Endothelial cell of umbilical vein (primary cell): ENCODE measurements at regions of chr5 and their contacts with region 1.

Region 1: DNA sequence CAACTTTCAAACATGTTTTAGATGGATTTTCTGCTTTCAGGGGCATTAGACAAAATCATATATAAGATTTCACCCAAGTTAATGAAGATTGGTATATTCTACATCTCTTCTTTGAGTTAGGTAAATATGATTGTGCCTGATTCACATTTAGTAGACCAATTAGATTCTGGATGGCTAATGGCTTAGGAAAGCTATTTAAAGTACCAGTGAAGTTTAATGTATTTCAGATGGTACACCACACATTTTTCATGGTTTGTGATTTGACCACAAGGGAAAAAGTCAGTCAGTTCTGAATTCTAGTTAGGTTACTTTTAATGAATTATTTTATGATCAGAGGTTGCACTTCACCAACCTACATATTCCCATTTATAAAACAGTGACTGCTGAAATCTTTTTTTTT is 409.7 kb downstream of the ADGRV1 start:
- DNase-seq: no peak
- H3K4me3 ChIP-seq: no peak overlapping the region
- H3K27ac ChIP-seq: peak overlapping the region; percentile 57
- H3K4me1 ChIP-seq: peaks cover 32% of the 10 kb centered on the region
- H3K27me3 ChIP-seq: no peaks in the 10 kb centered on the region
- CTCF ChIP-seq: no peak
- POLR2A ChIP-seq: no peak

Region 2: GRCh38 chr5:90621848-90622247 is 346.5 kb before region 1 on chr5:
- CTCF ChIA-PET with region 1: no interaction called
- POLR2A ChIA-PET with region 1: no interaction called
- dilution Hi-C with region 1: no loop called
- intact Hi-C with region 1: no loop called
- DNase-seq: no peak
- H3K4me3 ChIP-seq: no peak overlapping the region
- H3K27ac ChIP-seq: no peak overlapping the region
- H3K4me1 ChIP-seq: no peaks in the 10 kb centered on the region
- H3K27me3 ChIP-seq: no peaks in the 10 kb centered on the region
- CTCF ChIP-seq: no peak
- POLR2A ChIP-seq: no peak

Region 3: DNA sequence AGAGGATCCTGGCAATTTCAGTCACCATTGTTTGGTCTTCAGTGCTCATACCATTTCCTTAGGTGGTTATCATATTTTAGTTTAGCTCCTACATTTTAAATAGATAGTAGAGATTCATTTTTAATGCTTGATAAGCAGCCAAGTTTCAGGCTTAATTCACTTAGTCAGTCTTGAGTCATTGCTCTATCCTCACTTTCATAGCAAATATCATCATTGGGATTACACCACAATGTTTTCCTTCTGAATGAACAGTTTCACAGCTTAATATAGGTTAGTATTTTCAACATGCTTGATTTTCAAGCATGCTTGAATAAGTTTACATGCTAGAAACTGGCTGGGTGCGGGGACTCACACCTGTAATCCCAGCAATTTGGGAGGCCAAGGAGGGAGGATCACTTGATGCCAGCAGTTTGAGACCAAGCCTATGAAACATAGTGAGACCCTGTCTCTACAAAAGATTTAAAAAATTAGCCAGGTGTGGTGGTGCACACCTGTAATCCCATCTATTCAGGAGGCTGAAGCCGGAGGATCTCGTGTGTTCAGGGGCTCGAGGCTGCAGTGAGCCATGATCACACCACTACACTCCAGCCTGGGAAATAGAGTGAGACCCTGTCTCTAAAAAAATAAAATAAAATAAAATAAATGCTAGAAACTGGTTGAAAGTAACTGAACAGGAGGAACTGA is 69.8 kb before region 1 on chr5:
- CTCF ChIA-PET with region 1: no interaction called
- POLR2A ChIA-PET with region 1: no interaction called
- dilution Hi-C with region 1: no loop called
- intact Hi-C with region 1: no loop called
- DNase-seq: no peak
- H3K4me3 ChIP-seq: no peak overlapping the region
- H3K27ac ChIP-seq: no peak overlapping the region
- H3K4me1 ChIP-seq: no peaks in the 10 kb centered on the region
- H3K27me3 ChIP-seq: no peaks in the 10 kb centered on the region
- CTCF ChIP-seq: no peak
- POLR2A ChIP-seq: no peak

Region 4: GRCh38 chr5:90921418-90921973 is 46.8 kb before region 1 on chr5:
- CTCF ChIA-PET with region 1: no interaction called
- POLR2A ChIA-PET with region 1: no interaction called
- dilution Hi-C with region 1: no loop called
- intact Hi-C with region 1: no loop called
- DNase-seq: no peak
- H3K4me3 ChIP-seq: no peak overlapping the region
- H3K27ac ChIP-seq: no peak overlapping the region
- H3K4me1 ChIP-seq: peaks cover 7% of the 10 kb centered on the region
- H3K27me3 ChIP-seq: no peaks in the 10 kb centered on the region
- CTCF ChIP-seq: no peak
- POLR2A ChIP-seq: no peak

Region 5: DNA sequence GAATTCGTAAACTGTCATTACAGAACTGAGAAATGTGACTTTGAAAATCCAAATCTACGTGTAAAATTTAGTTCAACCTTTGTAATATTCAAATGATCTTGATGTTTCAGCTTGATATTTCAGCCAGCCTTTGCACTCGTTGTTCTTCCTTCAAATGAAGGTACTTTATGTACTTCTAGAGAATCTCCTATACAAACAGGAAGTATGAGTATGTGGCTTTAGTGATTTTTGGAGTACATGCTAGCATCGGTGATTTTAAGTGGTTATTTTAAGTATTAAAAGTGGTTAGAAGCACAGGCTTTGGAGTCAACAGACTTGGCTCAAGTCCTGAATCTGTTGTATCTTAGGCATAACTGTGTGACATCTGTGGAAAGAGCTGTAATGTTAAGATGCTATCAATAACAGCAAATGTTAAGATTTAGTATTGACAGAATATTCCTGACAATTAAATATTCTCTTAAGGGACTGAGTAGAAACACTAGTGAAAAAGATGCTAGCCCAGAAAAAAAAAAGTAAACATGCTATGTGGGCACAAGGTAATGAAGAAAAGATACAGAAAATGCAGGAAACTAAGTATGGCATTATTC is 11.7 kb before region 1 on chr5:
- CTCF ChIA-PET with region 1: interaction called, 10 read pairs
- POLR2A ChIA-PET with region 1: interaction called, 4 read pairs
- dilution Hi-C with region 1: no loop called
- intact Hi-C with region 1: no loop called
- DNase-seq: peak; percentile 50
- H3K4me3 ChIP-seq: no peak overlapping the region
- H3K27ac ChIP-seq: peak overlapping the region; percentile 52
- H3K4me1 ChIP-seq: peaks cover 14% of the 10 kb centered on the region
- H3K27me3 ChIP-seq: no peaks in the 10 kb centered on the region
- CTCF ChIP-seq: no peak
- POLR2A ChIP-seq: no peak

Region 6: DNA sequence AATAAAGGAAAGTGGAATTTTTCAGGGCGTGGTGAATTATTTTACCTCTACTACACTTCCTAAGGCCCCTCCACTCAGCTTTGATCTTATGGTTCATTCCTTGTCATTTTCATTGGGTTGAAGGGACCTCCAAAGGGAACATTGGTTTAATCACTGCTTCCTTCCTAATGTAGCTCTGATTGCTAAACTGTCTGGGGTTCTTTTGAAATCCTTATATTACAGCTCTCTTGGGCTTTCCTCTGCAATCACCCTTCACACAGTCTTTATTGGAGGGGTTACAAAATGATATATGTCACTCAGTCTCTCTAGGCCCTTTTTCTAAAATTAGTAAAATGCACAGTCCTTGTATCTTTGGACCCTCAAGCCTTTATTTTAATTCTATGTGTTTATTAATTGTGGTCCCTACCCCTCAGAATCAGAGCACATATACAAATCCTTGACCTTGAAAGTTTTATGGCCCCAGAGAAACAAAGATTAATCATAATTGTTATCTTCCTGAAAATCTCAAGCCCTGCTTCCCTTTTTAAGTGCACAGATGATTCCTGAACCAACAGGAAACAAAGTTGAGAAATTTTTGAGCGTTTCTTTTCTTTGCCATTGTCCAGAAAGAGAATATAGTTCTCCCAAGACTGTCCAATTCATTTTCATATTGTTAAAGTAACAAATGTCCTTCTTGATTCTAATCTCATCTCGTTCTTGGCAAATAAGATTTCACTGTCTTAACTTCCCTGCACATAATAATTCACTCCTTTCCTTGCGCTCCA is 84.8 kb after region 1 on chr5:
- CTCF ChIA-PET with region 1: interaction called, 6 read pairs
- POLR2A ChIA-PET with region 1: no interaction called
- dilution Hi-C with region 1: no loop called
- intact Hi-C with region 1: loop called (anchors 1 kb)
- DNase-seq: peak; percentile 78
- H3K4me3 ChIP-seq: no peak overlapping the region
- H3K27ac ChIP-seq: peak overlapping the region; percentile 23
- H3K4me1 ChIP-seq: peaks cover 10% of the 10 kb centered on the region
- H3K27me3 ChIP-seq: no peaks in the 10 kb centered on the region
- CTCF ChIP-seq: no peak
- POLR2A ChIP-seq: no peak

Region 7: DNA sequence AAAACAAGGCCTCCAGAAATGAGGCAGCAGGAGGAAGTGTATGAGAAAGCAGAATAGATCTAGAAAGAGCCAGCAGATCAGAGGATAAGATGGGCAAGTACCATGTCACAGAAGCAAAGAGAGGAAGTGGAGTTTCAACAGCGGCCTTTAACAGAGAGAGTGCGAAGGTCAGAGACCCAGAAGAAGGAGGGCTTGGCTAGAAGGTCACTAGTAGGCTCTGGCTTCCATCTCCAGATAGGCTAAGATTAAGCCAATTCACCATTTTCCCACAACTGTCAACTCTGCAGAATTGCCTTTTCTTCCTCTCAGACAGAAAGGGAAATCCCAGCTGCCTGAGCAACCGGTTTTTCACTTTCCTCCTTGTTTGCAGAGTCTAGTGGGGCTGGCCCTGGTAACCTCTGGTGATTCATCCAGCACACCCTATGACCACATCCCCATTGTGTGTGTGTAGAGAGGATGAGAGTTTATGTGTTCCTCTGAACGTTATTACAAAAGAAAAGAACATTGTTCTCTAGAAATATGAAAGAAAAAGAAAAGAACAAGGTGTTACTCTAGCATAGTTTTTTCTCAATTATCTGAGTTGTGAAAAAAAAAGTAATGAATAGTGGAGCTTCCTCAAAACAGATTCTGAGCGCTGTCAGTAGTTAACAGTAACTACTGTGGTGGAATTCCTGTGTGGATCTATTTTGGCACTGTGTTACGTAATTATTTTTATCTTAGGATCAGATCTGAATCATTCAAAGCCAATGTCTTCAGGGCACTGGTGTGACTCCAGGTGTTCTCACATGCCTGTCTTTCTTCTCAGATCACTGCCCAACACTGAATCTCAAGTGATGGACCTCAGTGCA is 194.4 kb after region 1 on chr5:
- CTCF ChIA-PET with region 1: no interaction called
- POLR2A ChIA-PET with region 1: no interaction called
- dilution Hi-C with region 1: no loop called
- intact Hi-C with region 1: loop called (anchors 2 kb)
- DNase-seq: peak; percentile 98
- H3K4me3 ChIP-seq: no peak overlapping the region
- H3K27ac ChIP-seq: peak overlapping the region; percentile 84
- H3K4me1 ChIP-seq: peaks cover 42% of the 10 kb centered on the region
- H3K27me3 ChIP-seq: no peaks in the 10 kb centered on the region
- CTCF ChIP-seq: no peak
- POLR2A ChIP-seq: no peak